Heart left ventricle (tissue), 16 donors: ENCODE measurements at regions of chr3 and their contacts with region 1.

Region 1: DNA sequence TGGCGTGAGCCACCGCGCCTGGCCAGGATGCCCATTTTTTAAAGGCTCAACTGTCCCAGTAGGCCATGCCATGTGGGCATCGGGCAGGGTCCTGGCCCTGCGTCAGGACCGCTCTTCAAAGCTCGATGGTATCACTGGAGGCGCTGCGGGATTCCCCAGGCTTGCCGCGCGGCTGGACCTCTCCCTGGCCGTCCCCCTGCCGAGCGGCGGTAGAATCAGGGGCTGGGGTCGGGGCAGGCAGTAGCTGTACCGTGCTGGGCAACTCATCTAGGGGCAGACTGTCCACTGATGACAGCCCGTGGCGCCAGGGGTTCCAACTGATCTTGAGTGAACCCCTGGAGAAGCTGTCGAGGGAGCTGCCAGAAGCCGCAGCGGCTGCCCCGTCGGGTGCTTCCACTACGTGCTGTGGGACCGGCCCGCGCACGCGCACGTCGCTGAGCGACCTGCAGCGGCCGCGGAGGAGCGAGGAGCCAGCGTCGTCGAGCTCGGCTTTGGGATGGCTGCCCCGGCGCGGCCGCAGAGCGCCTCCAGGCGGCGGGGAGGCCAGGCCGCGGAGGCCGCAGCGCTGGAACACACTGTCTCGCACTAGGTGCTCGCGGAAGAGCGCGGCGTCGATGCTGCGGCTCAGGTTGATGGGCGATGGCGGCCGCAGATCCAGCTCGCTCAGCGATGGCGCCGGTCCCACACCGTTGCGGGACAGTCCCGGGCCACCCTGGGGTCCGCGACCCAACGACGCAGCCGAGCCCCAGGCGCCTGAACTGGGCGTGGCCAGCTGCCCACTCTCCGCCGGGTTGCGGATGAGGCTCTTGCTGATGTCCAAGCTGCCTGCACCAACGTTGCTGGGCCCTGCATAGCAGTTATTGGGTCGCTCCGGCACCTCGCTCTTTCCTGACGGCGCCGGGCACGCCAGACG is 5.8 kb downstream of the PRRT3 start:
- DNase-seq: peak; percentile 87 to 93 (median 90)
- ATAC-seq: peak; percentile 56 to 91 (median 88)
- H3K4me3 ChIP-seq: peak overlapping the region; percentile 25 to 75 (median 65)
- H3K27ac ChIP-seq: peak overlapping the region in 11 of 12 donors; percentile 39 to 90 (median 71)
- H3K4me1 ChIP-seq: peaks cover 0 to 26% (median 14%) of the 10 kb centered on the region in 12 donors
- H3K27me3 ChIP-seq: peaks cover 0 to 1% (median 0%) of the 10 kb centered on the region in 9 donors
- CTCF ChIP-seq: peak; percentile 64 to 95 (median 76)
- POLR2A ChIP-seq: peak in 1 of 2 donors; percentile 54

Region 2: DNA sequence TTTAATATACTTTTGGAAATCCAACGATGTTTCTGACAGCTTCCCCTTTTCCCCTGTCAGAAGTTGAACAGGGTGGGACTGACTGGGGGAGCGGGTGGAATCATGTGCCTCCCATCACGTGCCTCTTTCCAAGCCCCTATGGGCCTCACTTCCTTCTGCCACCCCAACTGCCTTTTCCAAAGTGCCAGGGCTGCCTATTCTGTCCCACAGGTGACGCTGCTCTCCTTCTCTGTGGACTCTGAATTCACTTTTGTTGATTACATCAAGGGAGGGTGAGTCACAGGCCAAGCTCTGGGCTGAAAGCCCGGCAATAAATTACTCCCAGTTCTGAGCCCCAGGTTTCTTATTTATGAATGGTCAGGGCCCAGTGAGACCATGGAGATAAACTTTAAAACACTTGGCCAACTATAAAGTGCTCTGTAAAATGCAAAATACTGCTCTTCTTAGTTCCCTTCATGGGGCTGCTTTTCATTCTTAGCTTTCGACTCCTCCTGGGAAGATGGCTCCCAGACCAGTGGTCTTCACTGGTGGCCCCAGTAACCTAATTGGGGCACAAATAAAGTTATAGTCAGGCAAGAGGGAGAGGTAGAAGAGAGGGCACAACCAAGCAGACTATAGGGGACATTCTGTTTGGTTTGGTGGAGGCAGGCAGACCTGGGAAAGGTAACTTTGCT is 230.5 kb before region 1 on chr3:
- intact Hi-C with region 1: loop called in 1 of 10 experiments (anchors 10 kb)
- DNase-seq: peak in 4 of 5 donors; percentile 70 to 77 (median 72)
- ATAC-seq: peak; percentile 56 to 97 (median 94)
- H3K4me3 ChIP-seq: no peak overlapping the region
- H3K27ac ChIP-seq: peak overlapping the region in 4 of 12 donors; percentile 39 to 75 (median 60)
- H3K4me1 ChIP-seq: peaks cover 0 to 21% (median 0%) of the 10 kb centered on the region in 12 donors
- H3K27me3 ChIP-seq: no peaks in the 10 kb centered on the region
- CTCF ChIP-seq: peak; percentile 38 to 75 (median 56)
- POLR2A ChIP-seq: no peak

Region 3: GRCh38 chr3:9843715-9844438 is 102.5 kb before region 1 on chr3 and contains the start of gene RPUSD3:
- intact Hi-C with region 1: loop called in 1 of 10 experiments (anchors 5 kb)
- DNase-seq: peak; percentile 98 to 100 (median 99)
- ATAC-seq: peak; percentile 99 to 100 (median 99)
- H3K4me3 ChIP-seq: peak within 1 kb of the TSS; percentile 43 to 94 (median 76)
- H3K27ac ChIP-seq: peak within 1 kb of the TSS; percentile 43 to 87 (median 86)
- H3K4me1 ChIP-seq: peaks cover 0 to 21% (median 8%) of the 10 kb centered on the region in 12 donors
- H3K27me3 ChIP-seq: no peaks in the 10 kb centered on the region
- CTCF ChIP-seq: no peak
- POLR2A ChIP-seq: peak in 1 of 2 donors; percentile 87
- total RNA-seq, gene RPUSD3: 25.8 to 68.6 (median 31.1) TPM

Region 4: GRCh38 chr3:10115326-10116137 is 169.2 kb after region 1 on chr3 and contains the start of gene BRK1:
- intact Hi-C with region 1: loop called in 1 of 10 experiments (anchors 10 kb)
- DNase-seq: peak; percentile 94 to 98 (median 97)
- ATAC-seq: peak; percentile 100
- H3K4me3 ChIP-seq: peak within 1 kb of the TSS; percentile 60 to 97 (median 92)
- H3K27ac ChIP-seq: peak within 1 kb of the TSS; percentile 35 to 89 (median 84)
- H3K4me1 ChIP-seq: peaks cover 0 to 49% (median 30%) of the 10 kb centered on the region in 12 donors
- H3K27me3 ChIP-seq: no peaks in the 10 kb centered on the region
- CTCF ChIP-seq: no peak
- POLR2A ChIP-seq: peak; percentile 44 to 94
- total RNA-seq, gene BRK1: 69.8 to 109 (median 89.8) TPM

Region 5: DNA sequence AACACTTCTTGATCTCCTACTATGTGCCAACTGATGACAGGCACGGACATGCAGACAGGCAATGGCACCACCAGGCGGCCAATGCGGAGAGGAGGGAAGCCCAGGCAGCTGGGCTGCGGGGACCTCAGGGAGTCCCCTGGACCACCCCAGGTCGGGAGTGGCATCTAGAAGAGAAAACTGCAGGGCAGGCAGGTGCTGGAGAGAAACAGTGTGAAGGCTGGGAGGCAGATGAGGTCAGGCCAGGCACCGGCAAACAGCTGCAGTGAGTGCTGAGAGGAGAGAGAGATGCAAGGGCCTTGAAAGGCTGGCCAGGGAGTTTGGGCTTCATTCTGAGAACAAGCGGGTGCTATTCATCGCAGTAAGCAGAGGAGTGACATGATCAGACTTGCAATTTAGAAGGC is 1075.2 kb after region 1 on chr3:
- intact Hi-C with region 1: no loop called
- DNase-seq: no peak
- ATAC-seq: no peak
- H3K4me3 ChIP-seq: no peak overlapping the region
- H3K27ac ChIP-seq: no peak overlapping the region
- H3K4me1 ChIP-seq: no peaks in the 10 kb centered on the region
- H3K27me3 ChIP-seq: peaks cover 0 to 17% (median 0%) of the 10 kb centered on the region in 9 donors
- CTCF ChIP-seq: no peak
- POLR2A ChIP-seq: no peak